ENCODE measurements at regions of chr12 and their contacts with region 1.

Region 1: GRCh38 chr12:106223485-106224354 is 24.1 kb downstream of the CKAP4 start:
- DNase-seq: peak; percentile 57 to 83 (median 69)
- ATAC-seq: peak; percentile 62
- H3K4me3 ChIP-seq: no peak overlapping the region
- H3K4me3 Mint-ChIP-seq: no peak overlapping the region
- H3K27ac ChIP-seq: no peak overlapping the region
- H3K27ac Mint-ChIP-seq: no peak overlapping the region
- H3K4me1 ChIP-seq: peaks cover 20% of the 10 kb centered on the region
- H3K4me1 Mint-ChIP-seq: peaks cover 21% of the 10 kb centered on the region
- H3K27me3 ChIP-seq: peaks cover 0 to 5% of the 10 kb centered on the region in 2 experiments
- H3K27me3 Mint-ChIP-seq: peaks cover 5% of the 10 kb centered on the region
- CTCF ChIP-seq: peak; percentile 91

Region 2: GRCh38 chr12:105420659-105421240 is 803.0 kb before region 1 on chr12:
- CTCF ChIA-PET with region 1: interaction called, 3 read pairs
- POLR2A ChIA-PET with region 1: no interaction called
- intact Hi-C with region 1: loop called in 1 of 2 experiments (anchors 5 kb)
- DNase-seq: peak; percentile 26 to 71 (median 44)
- ATAC-seq: peak; percentile 55
- H3K4me3 ChIP-seq: no peak overlapping the region
- H3K4me3 Mint-ChIP-seq: no peak overlapping the region
- H3K27ac ChIP-seq: no peak overlapping the region
- H3K27ac Mint-ChIP-seq: no peak overlapping the region
- H3K4me1 ChIP-seq: no peaks in the 10 kb centered on the region
- H3K4me1 Mint-ChIP-seq: no peaks in the 10 kb centered on the region
- H3K27me3 ChIP-seq: no peaks in the 10 kb centered on the region
- H3K27me3 Mint-ChIP-seq: peaks cover under 1% of the 10 kb centered on the region
- CTCF ChIP-seq: peak; percentile 88

Region 3: GRCh38 chr12:105912882-105913713 is 310.6 kb before region 1 on chr12:
- CTCF ChIA-PET with region 1: no interaction called
- POLR2A ChIA-PET with region 1: no interaction called
- intact Hi-C with region 1: no loop called
- DNase-seq: no peak
- ATAC-seq: no peak
- H3K4me3 ChIP-seq: no peak overlapping the region
- H3K4me3 Mint-ChIP-seq: no peak overlapping the region
- H3K27ac ChIP-seq: no peak overlapping the region
- H3K27ac Mint-ChIP-seq: no peak overlapping the region
- H3K4me1 ChIP-seq: no peaks in the 10 kb centered on the region
- H3K4me1 Mint-ChIP-seq: no peaks in the 10 kb centered on the region
- H3K27me3 ChIP-seq: no peaks in the 10 kb centered on the region
- H3K27me3 Mint-ChIP-seq: peaks cover 6% of the 10 kb centered on the region
- CTCF ChIP-seq: no peak

Region 4: GRCh38 chr12:106145539-106146447 is 77.9 kb before region 1 on chr12:
- CTCF ChIA-PET with region 1: no interaction called
- POLR2A ChIA-PET with region 1: no interaction called
- intact Hi-C with region 1: no loop called
- DNase-seq: no peak
- ATAC-seq: no peak
- H3K4me3 ChIP-seq: no peak overlapping the region
- H3K4me3 Mint-ChIP-seq: no peak overlapping the region
- H3K27ac ChIP-seq: no peak overlapping the region
- H3K27ac Mint-ChIP-seq: no peak overlapping the region
- H3K4me1 ChIP-seq: no peaks in the 10 kb centered on the region
- H3K4me1 Mint-ChIP-seq: no peaks in the 10 kb centered on the region
- H3K27me3 ChIP-seq: peaks cover 14 to 17% of the 10 kb centered on the region in 2 experiments
- H3K27me3 Mint-ChIP-seq: peaks cover 75% of the 10 kb centered on the region
- CTCF ChIP-seq: no peak

Region 5: GRCh38 chr12:106205208-106206071 is 18.3 kb before region 1 on chr12:
- CTCF ChIA-PET with region 1: no interaction called
- POLR2A ChIA-PET with region 1: no interaction called
- intact Hi-C with region 1: no loop called
- DNase-seq: no peak
- ATAC-seq: no peak
- H3K4me3 ChIP-seq: no peak overlapping the region
- H3K4me3 Mint-ChIP-seq: no peak overlapping the region
- H3K27ac ChIP-seq: no peak overlapping the region
- H3K27ac Mint-ChIP-seq: no peak overlapping the region
- H3K4me1 ChIP-seq: no peaks in the 10 kb centered on the region
- H3K4me1 Mint-ChIP-seq: no peaks in the 10 kb centered on the region
- H3K27me3 ChIP-seq: no peaks in the 10 kb centered on the region
- H3K27me3 Mint-ChIP-seq: peaks cover 30% of the 10 kb centered on the region
- CTCF ChIP-seq: no peak

Region 6: GRCh38 chr12:106247674-106248311 is 24.1 kb after region 1 on chr12 and contains the start of gene CKAP4:
- CTCF ChIA-PET with region 1: interaction called, 10 read pairs
- POLR2A ChIA-PET with region 1: interaction called, 28 read pairs
- intact Hi-C with region 1: loop called in 1 of 2 experiments (anchors 2 kb)
- DNase-seq: peak; percentile 11 to 88 (median 54)
- ATAC-seq: peak; percentile 51
- H3K4me3 ChIP-seq: peak within 1 kb of the TSS; percentile 75
- H3K4me3 Mint-ChIP-seq: peak within 1 kb of the TSS; percentile 89
- H3K27ac ChIP-seq: peak within 1 kb of the TSS; percentile 81 to 89
- H3K27ac Mint-ChIP-seq: peak within 1 kb of the TSS; percentile 94
- H3K4me1 ChIP-seq: peaks cover 37% of the 10 kb centered on the region
- H3K4me1 Mint-ChIP-seq: peaks cover 43% of the 10 kb centered on the region
- H3K27me3 ChIP-seq: no peaks in the 10 kb centered on the region
- H3K27me3 Mint-ChIP-seq: no peaks in the 10 kb centered on the region
- CTCF ChIP-seq: no peak
- total RNA-seq, gene CKAP4: 14.7 to 15.7 TPM

Region 7: DNA sequence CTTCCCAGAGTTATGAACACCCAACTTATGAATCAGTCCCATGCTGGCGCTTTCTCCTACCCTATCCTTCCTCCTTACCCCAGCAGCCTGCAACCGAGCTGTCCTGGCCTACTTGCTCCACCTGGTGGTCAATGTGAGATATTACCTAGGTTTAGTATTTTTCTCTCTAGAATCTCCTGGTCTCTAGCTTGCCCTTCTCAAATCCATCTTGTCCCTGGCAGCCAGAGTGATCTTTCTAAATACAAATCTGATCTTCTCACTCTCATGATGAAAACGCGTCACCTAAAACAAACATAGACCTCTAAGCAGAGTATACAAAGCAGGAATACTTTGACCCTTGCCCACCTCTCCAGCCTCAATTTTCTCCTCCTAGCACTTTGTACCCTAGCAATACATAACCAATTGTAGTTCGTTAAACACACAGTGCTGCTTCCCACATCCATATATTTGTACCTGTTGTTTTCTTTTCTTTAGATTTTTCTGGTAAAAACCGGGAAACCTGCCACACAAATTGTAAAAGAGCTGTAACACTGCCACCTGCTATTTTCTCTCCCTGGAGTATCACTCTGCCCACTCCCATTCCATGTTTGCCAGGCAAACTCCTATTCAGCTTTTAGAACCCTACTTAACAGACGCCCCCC is 58.9 kb after region 1 on chr12:
- CTCF ChIA-PET with region 1: interaction called, 34 read pairs
- POLR2A ChIA-PET with region 1: interaction called, 26 read pairs
- intact Hi-C with region 1: loop called (anchors 1 kb)
- DNase-seq: peak; percentile 20 to 81 (median 37)
- ATAC-seq: peak; percentile 96
- H3K4me3 ChIP-seq: no peak overlapping the region
- H3K4me3 Mint-ChIP-seq: no peak overlapping the region
- H3K27ac ChIP-seq: no peak overlapping the region
- H3K27ac Mint-ChIP-seq: no peak overlapping the region
- H3K4me1 ChIP-seq: no peaks in the 10 kb centered on the region
- H3K4me1 Mint-ChIP-seq: no peaks in the 10 kb centered on the region
- H3K27me3 ChIP-seq: no peaks in the 10 kb centered on the region
- H3K27me3 Mint-ChIP-seq: peaks cover 10% of the 10 kb centered on the region
- CTCF ChIP-seq: peak; percentile 73

Region 8: GRCh38 chr12:106309671-106310505 is 86.2 kb after region 1 on chr12:
- CTCF ChIA-PET with region 1: interaction called, 10 read pairs
- POLR2A ChIA-PET with region 1: interaction called, 4 read pairs
- intact Hi-C with region 1: no loop called
- DNase-seq: no peak
- ATAC-seq: no peak
- H3K4me3 ChIP-seq: no peak overlapping the region
- H3K4me3 Mint-ChIP-seq: peak overlapping the region; percentile 30
- H3K27ac ChIP-seq: no peak overlapping the region
- H3K27ac Mint-ChIP-seq: peak overlapping the region; percentile 5
- H3K4me1 ChIP-seq: peaks cover 26% of the 10 kb centered on the region
- H3K4me1 Mint-ChIP-seq: peaks cover 68% of the 10 kb centered on the region
- H3K27me3 ChIP-seq: no peaks in the 10 kb centered on the region
- H3K27me3 Mint-ChIP-seq: no peaks in the 10 kb centered on the region
- CTCF ChIP-seq: no peak

Region 9: GRCh38 chr12:106780010-106780631 is 556.4 kb after region 1 on chr12:
- CTCF ChIA-PET with region 1: no interaction called
- POLR2A ChIA-PET with region 1: no interaction called
- intact Hi-C with region 1: no loop called
- DNase-seq: no peak
- ATAC-seq: no peak
- H3K4me3 ChIP-seq: no peak overlapping the region
- H3K4me3 Mint-ChIP-seq: no peak overlapping the region
- H3K27ac ChIP-seq: no peak overlapping the region
- H3K27ac Mint-ChIP-seq: no peak overlapping the region
- H3K4me1 ChIP-seq: peaks cover 15% of the 10 kb centered on the region
- H3K4me1 Mint-ChIP-seq: peaks cover 47% of the 10 kb centered on the region
- H3K27me3 ChIP-seq: no peaks in the 10 kb centered on the region
- H3K27me3 Mint-ChIP-seq: no peaks in the 10 kb centered on the region
- CTCF ChIP-seq: no peak